Activated CD4-positive, alpha-beta T cell treated with anti-CD3 and anti-CD28 coated beads, Interleukin-2, amount 10 ng/mL, durations not matched to agents 24 days and 14 days (primary cell): ENCODE measurements at regions of chr12 and their contacts with region 1.

Region 1: GRCh38 chr12:59808317-59808910 is 212.6 kb downstream of the SLC16A7 start:
- DNase-seq: peak; percentile 66
- H3K4me3 Mint-ChIP-seq: no peak overlapping the region
- H3K27ac Mint-ChIP-seq: no peak overlapping the region
- H3K4me1 Mint-ChIP-seq: no peaks in the 10 kb centered on the region
- H3K27me3 Mint-ChIP-seq: peaks cover 6% of the 10 kb centered on the region

Region 2: DNA sequence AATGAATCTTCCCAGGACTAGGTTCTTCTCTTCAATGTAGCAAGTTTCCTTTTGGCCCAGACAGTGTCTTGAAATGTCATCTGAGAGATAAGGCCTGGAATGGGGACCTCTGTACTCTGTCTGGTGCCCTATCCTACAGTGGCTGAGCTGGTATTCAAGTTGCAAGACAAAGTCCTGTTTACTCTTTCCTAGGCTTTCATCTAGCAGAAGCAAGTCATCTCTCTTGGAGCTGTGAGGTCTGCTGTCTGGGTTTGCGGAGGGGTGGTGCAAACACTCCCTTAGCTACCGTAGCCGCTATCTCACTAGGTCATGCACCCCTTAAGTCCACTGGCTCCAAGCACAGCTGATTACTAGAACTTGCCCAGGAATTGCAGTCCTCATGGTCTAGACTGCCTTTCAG is 362.3 kb before region 1 on chr12:
- intact Hi-C with region 1: loop called (anchors 1 kb)
- DNase-seq: no peak
- H3K4me3 Mint-ChIP-seq: no peak overlapping the region
- H3K27ac Mint-ChIP-seq: no peak overlapping the region
- H3K4me1 Mint-ChIP-seq: no peaks in the 10 kb centered on the region
- H3K27me3 Mint-ChIP-seq: peaks cover 1% of the 10 kb centered on the region

Region 3: GRCh38 chr12:59559696-59560095 is 248.7 kb before region 1 on chr12:
- intact Hi-C with region 1: loop called (anchors 10 kb)
- DNase-seq: no peak
- H3K4me3 Mint-ChIP-seq: no peak overlapping the region
- H3K27ac Mint-ChIP-seq: no peak overlapping the region
- H3K4me1 Mint-ChIP-seq: no peaks in the 10 kb centered on the region
- H3K27me3 Mint-ChIP-seq: peaks cover 6% of the 10 kb centered on the region

Region 4: DNA sequence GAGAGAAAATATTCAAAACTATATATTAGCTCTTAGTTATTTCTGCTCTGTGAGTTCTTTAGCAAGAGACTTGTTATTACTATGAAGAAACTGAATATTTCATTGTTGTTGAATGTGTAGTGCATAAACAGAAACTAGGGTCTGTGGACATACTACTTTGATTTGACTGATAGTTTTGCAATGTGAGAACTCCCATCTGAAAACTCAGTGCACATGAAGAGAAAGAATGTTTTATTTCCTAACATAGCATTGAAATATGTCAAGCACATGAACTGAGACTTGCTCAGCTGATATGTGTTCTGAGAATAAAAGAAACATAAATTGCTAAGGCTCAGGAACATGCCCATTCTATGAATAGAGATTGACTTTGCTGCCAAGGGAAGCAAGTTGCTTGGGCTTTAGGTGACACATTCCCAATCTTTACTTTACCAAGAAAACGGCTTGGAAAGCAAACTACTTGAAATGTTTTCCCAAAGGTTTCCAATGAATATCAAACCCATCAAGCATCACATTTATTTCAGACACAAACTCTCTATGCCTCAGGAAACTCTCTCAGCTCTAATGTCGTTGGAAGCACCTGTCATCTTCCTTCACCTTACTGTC is 77.8 kb after region 1 on chr12:
- intact Hi-C with region 1: no loop called
- DNase-seq: no peak
- H3K4me3 Mint-ChIP-seq: no peak overlapping the region
- H3K27ac Mint-ChIP-seq: no peak overlapping the region
- H3K4me1 Mint-ChIP-seq: no peaks in the 10 kb centered on the region
- H3K27me3 Mint-ChIP-seq: no peaks in the 10 kb centered on the region